ENCODE measurements at regions of chr2 and their contacts with region 1.

Region 1: GRCh38 chr2:180520206-180520605 is 460.2 kb upstream of the UBE2E3 start:
- DNase-seq: peak in 1 of 2 experiments; percentile 27
- H3K4me3 ChIP-seq: no peak overlapping the region
- H3K27ac ChIP-seq: no peak overlapping the region
- H3K4me1 ChIP-seq: peaks cover 55% of the 10 kb centered on the region
- H3K27me3 ChIP-seq: no peaks in the 10 kb centered on the region
- CTCF ChIP-seq: peak; percentile 48

Region 2: GRCh38 chr2:180625006-180625844 is 105.0 kb after region 1 on chr2:
- CTCF ChIA-PET with region 1: no interaction called
- POLR2A ChIA-PET with region 1: no interaction called
- intact Hi-C with region 1: loop called (anchors 5 kb)
- DNase-seq: no peak
- H3K4me3 ChIP-seq: no peak overlapping the region
- H3K27ac ChIP-seq: no peak overlapping the region
- H3K4me1 ChIP-seq: no peaks in the 10 kb centered on the region
- H3K27me3 ChIP-seq: no peaks in the 10 kb centered on the region
- CTCF ChIP-seq: no peak

Region 3: GRCh38 chr2:180675170-180675569 is 155.0 kb after region 1 on chr2:
- CTCF ChIA-PET with region 1: no interaction called
- POLR2A ChIA-PET with region 1: no interaction called
- intact Hi-C with region 1: no loop called
- DNase-seq: no peak
- H3K4me3 ChIP-seq: no peak overlapping the region
- H3K27ac ChIP-seq: no peak overlapping the region
- H3K4me1 ChIP-seq: peaks cover 37% of the 10 kb centered on the region
- H3K27me3 ChIP-seq: no peaks in the 10 kb centered on the region
- CTCF ChIP-seq: no peak

Region 4: DNA sequence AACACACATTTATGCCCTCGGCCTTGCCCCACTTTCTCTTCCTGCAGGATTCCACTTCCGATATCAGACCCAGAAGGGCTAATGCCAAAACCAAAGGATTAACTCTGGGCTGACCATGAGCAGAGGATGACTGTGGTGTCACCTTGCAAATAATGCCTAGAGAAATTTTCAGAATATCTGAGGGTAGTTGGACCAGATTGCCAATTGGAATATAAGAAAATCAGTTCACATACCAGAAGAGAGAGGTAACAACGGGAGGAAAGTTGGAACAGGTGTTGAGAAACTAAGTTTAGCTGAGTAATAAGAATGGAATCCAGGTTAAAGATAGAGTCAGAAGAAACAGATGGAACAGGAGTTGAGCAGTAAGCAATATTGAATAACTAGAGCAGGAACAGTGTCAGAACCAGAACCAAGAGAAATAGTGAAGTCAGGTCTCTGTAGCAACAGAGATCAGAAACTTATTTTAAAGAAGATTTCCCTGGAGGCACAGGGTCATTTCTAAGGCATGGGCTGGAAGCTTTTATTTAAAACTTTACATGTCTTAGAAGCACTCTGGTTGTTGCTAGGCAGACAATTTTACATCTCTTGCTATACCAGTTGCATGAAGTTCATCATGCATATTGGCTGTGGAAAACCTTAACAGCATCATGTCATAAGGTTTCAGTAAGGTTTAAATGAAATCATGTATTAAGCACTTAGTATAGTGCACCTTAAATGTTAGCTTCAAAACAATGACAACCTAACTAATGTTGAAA is 227.7 kb after region 1 on chr2:
- CTCF ChIA-PET with region 1: no interaction called
- POLR2A ChIA-PET with region 1: no interaction called
- intact Hi-C with region 1: loop called (anchors 2 kb)
- DNase-seq: peak; percentile 67 to 95
- H3K4me3 ChIP-seq: peak overlapping the region; percentile 6; the same call in 1 of the 2 replicates
- H3K27ac ChIP-seq: peak overlapping the region; percentile 49
- H3K4me1 ChIP-seq: peaks cover 26% of the 10 kb centered on the region
- H3K27me3 ChIP-seq: no peaks in the 10 kb centered on the region
- CTCF ChIP-seq: no peak

Region 5: DNA sequence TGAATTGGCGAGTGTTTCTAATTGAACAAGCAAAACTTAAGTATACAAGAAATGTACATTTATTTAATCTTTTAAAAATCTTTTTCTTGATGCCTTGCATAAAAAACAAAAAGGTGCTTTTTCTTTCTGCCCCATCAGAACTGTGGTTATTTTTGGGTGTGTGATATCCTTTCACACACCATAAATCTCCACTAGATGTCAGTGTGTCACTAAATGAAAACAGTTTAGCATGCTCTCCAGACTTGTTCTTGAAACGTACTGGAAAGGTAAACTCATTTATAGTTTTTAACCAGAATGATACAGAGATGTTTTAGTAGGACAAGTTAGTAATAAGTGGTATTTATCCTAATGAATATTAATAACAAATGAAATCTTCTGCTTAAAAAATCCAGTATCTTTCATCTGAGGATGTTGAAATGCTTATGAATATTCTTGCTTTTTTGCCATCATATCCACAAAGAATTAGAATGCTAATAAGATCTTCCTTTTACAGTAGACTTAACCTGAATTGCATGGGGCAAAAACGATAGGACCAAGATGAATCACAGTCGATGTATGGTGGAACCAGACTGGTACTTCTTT is 557.0 kb after region 1 on chr2:
- CTCF ChIA-PET with region 1: no interaction called
- POLR2A ChIA-PET with region 1: no interaction called
- intact Hi-C with region 1: loop called (anchors 10 kb)
- DNase-seq: peak in 1 of 2 experiments; percentile 63
- H3K4me3 ChIP-seq: no peak overlapping the region
- H3K27ac ChIP-seq: no peak overlapping the region
- H3K4me1 ChIP-seq: no peaks in the 10 kb centered on the region
- H3K27me3 ChIP-seq: no peaks in the 10 kb centered on the region
- CTCF ChIP-seq: peak; percentile 95

Measured in PC-9 (cell line).